Right ventricle myocardium inferior (tissue), 1 donor: ENCODE measurements at regions of chr1 and their contacts with region 1.

Region 1: DNA sequence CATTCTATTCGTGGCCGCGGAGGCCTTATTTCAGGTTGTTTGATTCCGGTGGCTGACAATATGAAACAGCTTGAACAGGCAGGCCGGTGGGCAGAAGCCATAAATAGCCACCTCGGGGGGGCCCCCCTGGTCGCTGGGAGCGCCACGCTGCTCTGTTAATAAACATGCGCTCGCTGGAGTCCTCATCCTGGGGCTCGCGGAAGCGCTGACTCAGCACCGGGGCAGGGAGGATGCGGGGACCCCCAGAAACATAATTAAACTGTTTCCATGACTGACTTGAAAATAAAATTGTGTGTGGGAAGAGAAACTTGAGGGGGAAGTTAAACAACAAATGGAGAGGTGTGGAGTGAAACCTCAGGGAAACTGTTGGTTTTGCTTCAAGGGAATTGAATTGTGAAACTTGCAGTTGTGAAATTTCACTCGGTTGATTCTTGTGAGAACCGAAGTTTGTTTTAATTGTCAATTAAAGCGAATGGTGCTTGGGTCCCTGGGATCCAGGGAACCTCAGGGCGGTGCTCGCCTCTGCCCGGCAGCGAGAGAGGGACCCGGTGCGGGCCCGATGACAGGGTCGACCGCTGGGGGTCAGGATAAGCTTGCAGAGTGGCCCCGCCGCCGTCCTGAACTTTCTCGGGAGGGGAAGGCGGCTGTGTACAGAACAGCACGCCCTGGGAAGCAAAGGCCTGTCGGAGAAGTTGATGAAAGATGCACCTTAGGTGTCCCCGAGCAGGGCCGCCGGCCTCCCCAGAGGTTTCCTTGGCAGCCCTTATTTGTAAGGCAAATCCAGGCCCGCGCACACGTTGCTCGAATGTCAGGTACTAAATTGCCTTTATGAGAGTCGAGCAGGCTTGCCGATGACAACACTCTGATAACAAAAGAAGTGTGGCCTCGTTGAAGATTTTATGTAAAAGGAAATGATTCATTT is 176.9 kb upstream of the LMO4 start:
- DNase-seq: peak; percentile 88
- ATAC-seq: peak; percentile 95

Region 2: GRCh38 chr1:86527306-86527705 is 624.5 kb before region 1 on chr1:
- intact Hi-C with region 1: no loop called
- DNase-seq: no peak
- ATAC-seq: no peak

Region 3: DNA sequence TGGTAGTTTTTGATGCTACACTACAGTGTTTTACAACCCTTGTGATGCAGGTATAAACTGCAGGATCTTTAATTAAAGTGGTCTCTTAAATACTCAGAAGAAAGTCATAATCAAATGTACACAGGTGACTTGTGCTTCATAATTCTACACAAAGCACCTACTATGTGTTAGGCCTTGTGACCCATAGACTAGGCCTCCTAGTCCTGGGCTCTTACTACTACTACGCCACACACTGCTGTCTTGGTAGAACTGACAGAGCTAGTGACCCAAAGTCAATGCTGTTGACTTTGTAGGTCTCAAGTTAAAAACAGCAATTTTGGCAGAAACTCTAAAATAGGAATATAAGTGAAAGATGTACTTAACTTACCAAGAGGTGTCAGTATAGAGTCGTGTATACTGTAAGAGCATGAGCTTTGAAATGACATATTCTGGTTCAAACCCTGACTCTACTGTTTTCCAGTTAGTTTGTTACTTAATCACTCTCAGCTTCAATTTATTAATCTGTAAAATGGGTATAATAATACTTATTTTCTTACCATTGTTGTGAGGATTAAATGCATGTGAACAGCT is 128.3 kb after region 1 on chr1:
- intact Hi-C with region 1: loop called (anchors 5 kb)
- DNase-seq: no peak
- ATAC-seq: no peak

Region 4: DNA sequence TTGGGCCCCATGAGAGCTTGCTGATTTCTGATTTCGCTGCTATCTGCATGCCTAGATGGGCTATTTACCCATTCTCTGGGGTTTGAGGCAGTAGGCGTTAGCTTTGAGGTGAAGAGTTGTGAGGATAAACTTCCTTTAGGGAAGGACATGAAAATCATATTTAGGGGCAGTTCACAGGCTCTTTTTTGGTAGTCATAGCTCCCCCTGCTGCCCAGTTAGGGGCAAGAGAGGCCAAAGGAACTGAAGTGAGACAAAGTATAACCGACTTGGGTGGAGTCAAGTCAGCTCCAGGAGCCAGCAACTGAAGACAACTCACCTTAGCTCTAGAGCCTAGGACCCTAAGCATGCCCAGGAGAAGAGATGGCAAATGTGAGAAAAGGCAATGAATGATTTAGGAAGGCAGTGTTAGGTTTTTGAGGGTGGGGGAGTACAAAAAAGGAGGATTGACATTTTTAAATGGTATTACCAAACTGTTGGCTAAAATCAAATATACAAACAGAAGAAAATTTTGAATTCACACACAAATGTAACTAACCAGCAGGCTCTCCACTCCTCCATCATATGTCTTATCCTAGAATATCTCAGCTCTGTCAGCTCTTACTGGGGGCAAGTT is 802.1 kb after region 1 on chr1:
- intact Hi-C with region 1: loop called (anchors 10 kb)
- DNase-seq: no peak
- ATAC-seq: peak; percentile 76

Region 5: GRCh38 chr1:88618331-88618730 is 1466.6 kb after region 1 on chr1:
- intact Hi-C with region 1: no loop called
- DNase-seq: no peak
- ATAC-seq: no peak